Right ventricle myocardium superior (tissue), 1 donor: ENCODE measurements at regions of chr19 and their contacts with region 1.

Region 1: DNA sequence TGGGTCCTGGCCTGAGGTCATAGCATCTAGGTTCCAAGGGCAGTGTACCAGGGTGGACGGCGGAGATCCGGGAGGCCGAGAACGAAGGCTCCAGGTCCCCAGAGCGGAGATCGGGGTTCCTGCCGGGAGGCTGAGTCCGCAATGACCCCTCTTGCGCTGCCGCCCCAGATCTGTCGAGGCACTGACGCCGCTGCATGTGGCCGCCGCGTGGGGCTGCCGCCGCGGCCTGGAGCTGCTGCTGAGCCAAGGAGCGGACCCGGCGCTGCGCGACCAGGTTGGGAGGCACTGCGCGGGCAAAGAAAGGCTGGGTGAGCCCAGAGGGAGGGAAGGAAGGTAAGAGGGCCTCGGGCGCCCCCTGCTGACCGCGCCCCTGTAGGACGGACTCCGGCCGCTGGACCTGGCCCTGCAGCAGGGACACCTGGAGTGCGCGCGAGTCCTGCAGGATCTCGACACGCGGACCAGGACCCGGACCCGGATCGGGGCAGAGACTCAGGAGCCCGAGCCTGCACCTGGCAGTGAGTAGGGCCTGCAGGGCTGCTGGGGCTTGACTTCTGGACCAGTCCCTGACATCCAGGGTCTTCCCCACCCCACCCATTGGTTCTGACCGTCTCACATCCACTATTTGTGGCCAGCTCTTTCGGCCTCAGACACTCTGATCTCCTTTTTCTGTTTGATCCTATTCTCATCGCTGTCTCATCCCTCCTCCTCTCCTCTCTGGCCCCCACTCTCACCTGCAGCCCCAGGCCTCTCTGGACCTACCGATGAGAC is 971 bp downstream of the ANKLE1 start:
- DNase-seq: peak; percentile 91
- ATAC-seq: peak; percentile 96

Region 2: DNA sequence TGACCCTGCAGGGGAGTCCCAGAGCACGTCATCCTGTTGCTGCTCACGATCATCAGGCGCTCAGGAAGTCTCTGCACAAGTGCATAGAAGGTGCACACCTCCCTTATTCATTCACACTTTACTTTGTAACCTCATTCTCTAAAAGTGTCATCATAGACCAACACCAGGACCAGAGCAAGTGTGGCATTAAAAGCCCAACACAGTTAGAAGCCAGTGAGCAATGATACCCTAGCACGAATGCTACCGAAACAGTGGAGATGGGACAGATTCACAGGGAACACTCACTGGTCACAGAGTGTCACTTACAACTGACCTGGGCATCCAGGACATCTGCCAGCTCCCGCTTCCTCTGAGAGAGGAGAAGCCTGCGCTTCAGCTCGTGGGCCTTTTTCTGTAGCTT is 224.4 kb before region 1 on chr19:
- intact Hi-C with region 1: no loop called
- DNase-seq: no peak
- ATAC-seq: no peak

Region 3: GRCh38 chr19:17069218-17069617 is 213.5 kb before region 1 on chr19:
- intact Hi-C with region 1: loop called (anchors 5 kb)
- DNase-seq: no peak
- ATAC-seq: no peak

Region 4: DNA sequence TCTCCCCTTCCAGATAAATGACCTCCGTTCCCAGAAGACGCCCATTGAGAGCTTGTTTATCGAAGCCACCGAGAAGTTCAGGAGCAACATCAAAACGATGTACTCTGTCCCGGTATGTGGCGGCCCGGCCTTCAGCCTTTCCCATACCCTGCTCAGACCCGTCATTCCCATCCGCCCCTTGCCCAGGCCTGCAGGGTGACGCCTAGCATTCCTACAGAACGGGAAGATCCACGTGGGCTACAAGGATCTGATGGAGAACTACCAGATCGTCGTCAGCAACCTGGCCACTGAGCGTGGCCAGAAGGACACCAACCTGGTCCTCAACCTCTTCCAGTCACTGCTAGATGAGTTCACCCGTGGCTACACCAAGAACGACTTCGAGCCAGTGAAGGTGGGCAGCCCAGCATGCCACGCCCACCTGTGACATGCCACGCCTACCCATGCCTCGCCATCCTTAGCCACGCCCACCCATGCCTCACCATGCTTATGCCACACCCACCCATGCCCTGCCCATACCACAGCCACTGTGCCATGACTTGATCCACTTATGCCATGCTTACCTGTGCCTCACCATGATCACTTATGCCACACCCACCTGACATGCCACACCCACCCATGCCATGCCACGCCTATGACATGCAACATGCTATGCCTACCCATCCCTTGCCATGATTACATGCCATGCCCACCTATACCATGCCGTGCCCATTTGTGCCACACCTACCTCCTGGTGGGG is 80.6 kb before region 1 on chr19:
- intact Hi-C with region 1: loop called (anchors 5 kb)
- DNase-seq: no peak
- ATAC-seq: no peak